Activated CD4-positive, alpha-beta T cell treated with anti-CD3 and anti-CD28 coated beads for 36 hours (primary cell): ENCODE measurements at regions of chr14 and their contacts with region 1.

Region 1: DNA sequence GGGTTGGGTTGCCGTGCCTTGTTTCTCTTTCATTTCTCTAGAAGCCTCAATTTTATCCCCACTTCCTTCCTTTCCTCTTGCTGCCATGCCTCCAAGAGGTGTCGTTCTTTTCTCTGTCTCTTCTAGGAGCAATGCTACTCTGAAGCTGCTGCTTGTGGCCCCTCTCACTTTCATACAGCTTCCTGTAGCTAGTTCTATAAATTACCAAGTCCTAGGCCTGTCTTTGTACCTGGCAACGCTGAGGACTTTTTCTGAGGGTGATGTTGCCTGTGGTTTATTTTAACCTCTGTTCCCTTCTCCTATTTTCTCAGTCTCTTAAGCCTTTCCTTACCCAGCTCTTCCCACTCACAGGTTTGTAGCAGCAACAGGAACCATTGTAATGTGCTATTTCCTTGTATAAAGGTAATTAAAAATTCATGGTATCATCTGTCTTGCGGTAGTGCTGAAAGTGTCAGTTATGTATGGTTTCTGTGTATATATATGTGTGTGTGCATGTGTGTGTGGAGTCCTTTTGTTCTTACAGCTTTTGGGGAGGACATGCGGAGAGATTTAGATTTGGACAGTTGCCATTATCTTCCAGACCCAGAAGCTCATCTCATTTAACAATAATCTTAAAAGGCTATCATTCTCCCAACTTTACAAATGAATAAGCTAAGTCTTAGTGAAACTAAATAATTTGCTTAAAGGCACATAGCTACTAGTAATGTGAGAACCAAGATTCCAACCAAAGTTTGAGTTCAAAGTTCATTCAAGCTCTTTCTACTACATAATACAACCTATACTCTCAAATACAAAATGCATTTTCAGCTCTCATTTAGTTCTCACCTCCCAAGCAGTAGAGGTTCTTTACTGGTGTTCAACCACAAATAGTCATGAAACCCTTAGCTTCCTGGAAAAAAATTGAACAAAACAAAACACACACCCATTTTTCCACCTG is 43.8 kb downstream of the DDHD1 start:
- DNase-seq: peak; percentile 79
- ATAC-seq: peak; percentile 88
- H3K4me3 Mint-ChIP-seq: no peak overlapping the region
- H3K27ac Mint-ChIP-seq: no peak overlapping the region
- H3K4me1 Mint-ChIP-seq: peaks cover 25% of the 10 kb centered on the region
- H3K27me3 Mint-ChIP-seq: no peaks in the 10 kb centered on the region

Region 2: DNA sequence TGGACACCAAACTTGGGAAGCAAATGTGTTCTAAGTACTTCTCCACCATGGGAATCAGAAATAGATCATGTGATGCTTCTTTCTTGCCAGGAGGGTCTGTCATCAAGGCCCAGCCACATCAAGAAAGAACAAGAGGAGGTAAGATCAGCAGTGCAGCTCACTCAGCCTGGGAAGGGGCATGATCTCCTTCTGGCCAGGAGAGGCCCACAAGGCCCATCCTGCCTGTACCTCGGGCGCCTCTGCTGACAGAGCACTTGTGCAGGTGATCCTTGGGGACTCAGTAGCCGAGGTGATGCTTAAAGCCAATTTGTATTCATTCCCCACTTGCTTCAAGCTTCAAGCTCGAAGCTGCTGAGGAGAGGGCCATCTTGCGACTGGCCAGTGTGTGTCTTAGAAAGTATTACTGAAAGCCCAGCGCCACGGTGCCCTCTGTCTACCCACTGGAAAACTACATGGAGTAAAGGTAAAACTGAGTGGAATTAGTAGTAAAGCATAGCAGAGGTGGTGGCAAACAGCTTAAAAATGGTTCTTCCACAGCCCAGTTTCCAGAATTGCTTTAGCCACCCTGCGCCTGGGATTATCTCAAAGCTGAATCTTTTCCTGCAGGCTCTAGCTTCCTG is 1093.9 kb before region 1 on chr14:
- CTCF ChIA-PET with region 1: no interaction called
- POLR2A ChIA-PET with region 1: no interaction called
- intact Hi-C with region 1: no loop called
- DNase-seq: peak; percentile 31
- ATAC-seq: no peak
- H3K4me3 Mint-ChIP-seq: no peak overlapping the region
- H3K27ac Mint-ChIP-seq: no peak overlapping the region
- H3K4me1 Mint-ChIP-seq: peaks cover 8% of the 10 kb centered on the region
- H3K27me3 Mint-ChIP-seq: peaks cover 5% of the 10 kb centered on the region

Region 3: DNA sequence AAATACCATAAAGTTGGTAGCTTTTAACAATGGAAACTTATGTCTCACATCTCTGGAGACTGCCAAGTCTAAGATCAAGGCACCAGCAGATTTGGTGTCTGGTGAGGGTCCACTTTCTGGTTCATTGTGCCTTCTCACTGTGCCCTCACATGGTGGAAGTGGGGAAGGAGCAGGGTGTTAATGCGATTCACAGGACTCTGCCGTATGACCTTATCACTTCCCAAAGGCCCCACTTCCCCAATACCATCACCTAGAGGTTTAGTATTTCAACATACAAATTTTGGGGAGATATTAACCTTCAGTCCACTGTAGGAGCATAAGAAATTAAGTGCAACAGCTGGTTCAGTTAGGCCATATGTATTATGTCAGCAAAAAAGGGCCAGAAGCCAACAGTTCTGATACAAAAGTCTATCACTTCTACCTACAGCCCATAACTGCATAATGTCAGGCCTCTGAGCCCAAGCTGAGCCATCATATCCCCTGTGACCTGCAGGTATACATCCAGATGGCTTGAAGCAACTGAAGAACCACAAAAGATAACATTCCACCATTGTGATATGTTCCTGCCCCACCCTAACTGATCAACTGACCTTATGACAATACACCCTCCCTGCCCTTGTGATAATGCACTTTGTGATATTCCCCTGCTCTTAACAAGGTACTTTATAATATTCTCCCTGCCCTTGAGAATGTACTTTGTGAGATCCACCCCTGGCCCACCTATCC is 19.1 kb after region 1 on chr14:
- CTCF ChIA-PET with region 1: interaction called, 5 read pairs
- POLR2A ChIA-PET with region 1: no interaction called
- intact Hi-C with region 1: loop called in 1 of 2 experiments (anchors 1 kb)
- DNase-seq: no peak
- ATAC-seq: no peak
- H3K4me3 Mint-ChIP-seq: no peak overlapping the region
- H3K27ac Mint-ChIP-seq: no peak overlapping the region
- H3K4me1 Mint-ChIP-seq: peaks cover 12% of the 10 kb centered on the region
- H3K27me3 Mint-ChIP-seq: no peaks in the 10 kb centered on the region

Region 4: GRCh38 chr14:53144244-53144643 is 34.9 kb after region 1 on chr14:
- CTCF ChIA-PET with region 1: interaction called, 42 read pairs
- POLR2A ChIA-PET with region 1: interaction called, 4 read pairs
- intact Hi-C with region 1: loop called (anchors 1 kb)
- DNase-seq: peak; percentile 18
- ATAC-seq: peak; percentile 89
- H3K4me3 Mint-ChIP-seq: no peak overlapping the region
- H3K27ac Mint-ChIP-seq: peak overlapping the region; percentile 37
- H3K4me1 Mint-ChIP-seq: peaks cover 68% of the 10 kb centered on the region
- H3K27me3 Mint-ChIP-seq: no peaks in the 10 kb centered on the region

Region 5: GRCh38 chr14:53180268-53181221 is 71.2 kb after region 1 on chr14:
- CTCF ChIA-PET with region 1: no interaction called
- POLR2A ChIA-PET with region 1: no interaction called
- intact Hi-C with region 1: loop called (anchors 1 to 2 kb)
- DNase-seq: peak; percentile 61
- ATAC-seq: peak; percentile 73
- H3K4me3 Mint-ChIP-seq: no peak overlapping the region
- H3K27ac Mint-ChIP-seq: peak overlapping the region; percentile 71
- H3K4me1 Mint-ChIP-seq: peaks cover 39% of the 10 kb centered on the region
- H3K27me3 Mint-ChIP-seq: peaks cover 2% of the 10 kb centered on the region